ENCODE measurements at regions of chr17 and their contacts with region 1.

Region 1: GRCh38 chr17:27332485-27333409 is 38.8 kb downstream of the WSB1 start:
- DNase-seq: peak; percentile 89
- H3K4me3 ChIP-seq: peak overlapping the region; percentile 61
- H3K27ac ChIP-seq: peak overlapping the region; percentile 86
- H3K27me3 ChIP-seq: no peaks in the 10 kb centered on the region
- CTCF ChIP-seq: peak; percentile 78

Region 2: DNA sequence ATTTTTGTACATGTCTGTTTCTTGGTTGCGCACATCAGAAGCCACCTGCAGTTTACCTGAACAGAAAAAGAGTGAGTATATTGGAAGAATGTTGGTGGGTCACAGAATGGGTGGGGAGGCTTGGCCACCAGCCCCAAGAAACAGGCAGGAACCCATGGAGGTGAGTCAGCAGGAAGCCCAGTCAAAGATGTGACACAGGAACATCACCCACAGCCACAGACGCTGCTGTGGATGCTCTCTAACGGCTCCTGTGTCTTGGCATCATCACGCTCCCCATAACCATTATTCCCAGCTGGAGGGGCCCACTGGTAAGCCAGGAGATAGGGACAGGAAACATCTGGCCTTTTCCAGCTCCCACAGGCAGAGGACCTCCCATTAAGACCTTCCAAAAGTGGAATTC is 132.8 kb before region 1 on chr17:
- CTCF ChIA-PET with region 1: interaction called, 13 read pairs
- POLR2A ChIA-PET with region 1: no interaction called
- DNase-seq: no peak
- H3K4me3 ChIP-seq: no peak overlapping the region
- H3K27ac ChIP-seq: no peak overlapping the region
- H3K27me3 ChIP-seq: peaks cover 5% of the 10 kb centered on the region
- CTCF ChIP-seq: no peak

Region 3: GRCh38 chr17:27315322-27315721 is 17.4 kb before region 1 on chr17:
- CTCF ChIA-PET with region 1: interaction called, 14 read pairs
- POLR2A ChIA-PET with region 1: no interaction called
- DNase-seq: peak; percentile 86
- H3K4me3 ChIP-seq: no peak overlapping the region
- H3K27ac ChIP-seq: peak overlapping the region; percentile 57
- H3K27me3 ChIP-seq: no peaks in the 10 kb centered on the region
- CTCF ChIP-seq: no peak

Region 4: DNA sequence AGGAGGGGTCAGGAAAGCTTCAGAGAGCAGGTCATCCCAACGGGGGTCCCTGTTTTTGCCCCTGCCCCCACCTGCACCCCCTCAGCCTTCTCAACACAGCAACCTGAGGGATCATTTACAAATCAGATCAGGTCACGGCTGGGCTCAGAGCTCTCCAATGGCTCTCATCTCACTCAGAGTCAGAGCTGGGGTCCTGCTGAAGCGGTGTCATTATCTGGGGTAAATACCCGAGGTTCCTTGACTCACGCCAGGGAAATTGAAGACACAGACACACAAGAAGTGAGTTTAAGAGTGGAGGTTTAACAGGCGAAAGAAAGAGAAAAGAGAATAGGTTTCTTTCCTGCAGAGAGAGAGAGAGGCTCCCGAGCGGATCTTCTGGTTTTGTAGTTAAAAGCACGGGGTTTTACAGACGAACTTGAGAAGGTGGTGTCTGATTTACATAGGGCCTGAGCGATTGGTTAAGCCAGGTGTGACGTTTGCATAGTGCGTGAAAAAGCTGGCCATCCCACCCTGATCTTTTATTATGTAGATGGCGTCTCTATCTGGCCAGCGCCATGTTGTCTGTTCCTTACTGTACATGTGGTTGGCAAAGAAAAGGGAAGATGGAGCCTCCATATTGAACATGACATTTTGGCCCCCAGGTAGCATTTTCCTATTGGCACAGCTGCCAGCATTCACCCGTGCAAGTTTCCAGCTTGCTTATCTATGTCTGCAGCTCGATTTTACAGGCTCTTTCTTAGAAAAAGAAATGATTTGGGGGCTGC is 12.6 kb after region 1 on chr17:
- CTCF ChIA-PET with region 1: interaction called, 10 read pairs
- POLR2A ChIA-PET with region 1: no interaction called
- DNase-seq: no peak
- H3K4me3 ChIP-seq: no peak overlapping the region
- H3K27ac ChIP-seq: no peak overlapping the region
- H3K27me3 ChIP-seq: no peaks in the 10 kb centered on the region
- CTCF ChIP-seq: no peak

Region 5: DNA sequence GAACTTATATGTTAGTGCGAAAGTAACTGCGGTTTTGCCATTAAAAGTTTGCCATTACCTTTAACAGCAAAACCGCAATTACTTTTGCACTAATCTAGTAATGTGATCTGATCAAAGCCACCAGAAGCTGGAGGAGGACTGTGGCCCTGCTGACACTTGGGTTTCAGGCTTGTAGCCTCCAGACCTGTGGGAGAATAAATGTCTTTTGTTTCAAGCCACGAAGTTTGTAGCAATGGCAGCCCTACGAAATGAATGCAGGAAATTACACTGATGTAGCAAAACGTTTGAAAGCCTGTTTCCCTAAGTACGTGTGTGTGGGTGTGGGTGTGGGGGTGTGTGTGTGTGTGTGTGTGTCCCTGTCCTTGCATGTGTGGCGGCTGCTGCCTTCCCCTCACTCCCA is 27.8 kb after region 1 on chr17:
- CTCF ChIA-PET with region 1: no interaction called
- POLR2A ChIA-PET with region 1: no interaction called
- DNase-seq: no peak
- H3K4me3 ChIP-seq: no peak overlapping the region
- H3K27ac ChIP-seq: no peak overlapping the region
- H3K27me3 ChIP-seq: peaks cover 3% of the 10 kb centered on the region
- CTCF ChIP-seq: no peak